Activated T-helper 1 cell treated with anti-CD3 and anti-CD28 coated beads, Interleukin-12 subunit alpha, Interleukin-12 subunit beta, Interleukin-2, Interleukin-4 antibody, amounts not matched to agents 30 ng/mL and 10 ng/mL and 1 ng/mL, durations not matched to agents 14 hours and 24 hours and 36 hours (primary cell): ENCODE measurements at regions of chr3 and their contacts with region 1.

Region 1: DNA sequence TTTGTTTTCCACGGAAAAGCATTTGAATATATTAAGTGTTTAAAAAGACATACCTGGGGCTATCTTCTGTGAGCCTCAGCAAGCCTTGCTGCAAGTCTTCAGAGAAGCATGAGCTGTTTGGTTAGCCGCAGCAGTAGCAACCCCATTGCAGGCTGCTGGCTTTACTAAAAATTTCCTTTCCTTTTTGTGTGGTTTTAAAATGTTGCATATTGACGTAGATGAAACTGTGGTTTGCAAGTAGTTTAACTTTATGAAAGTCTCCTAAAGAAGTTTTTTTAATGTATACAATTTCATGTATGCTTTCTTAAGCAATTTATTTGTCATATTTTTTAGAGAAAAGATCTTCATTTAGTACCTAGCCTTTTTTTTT is at the start of gene GPR171:
- DNase-seq: peak; percentile 72
- H3K4me3 Mint-ChIP-seq: peak within 1 kb of the TSS; percentile 96
- H3K27ac Mint-ChIP-seq: peak within 1 kb of the TSS; percentile 99
- H3K4me1 Mint-ChIP-seq: peaks cover 73% of the 10 kb centered on the region
- H3K27me3 Mint-ChIP-seq: no peaks in the 10 kb centered on the region
- total RNA-seq, gene GPR171: 172 and 191 TPM in 2 replicates

Region 2: DNA sequence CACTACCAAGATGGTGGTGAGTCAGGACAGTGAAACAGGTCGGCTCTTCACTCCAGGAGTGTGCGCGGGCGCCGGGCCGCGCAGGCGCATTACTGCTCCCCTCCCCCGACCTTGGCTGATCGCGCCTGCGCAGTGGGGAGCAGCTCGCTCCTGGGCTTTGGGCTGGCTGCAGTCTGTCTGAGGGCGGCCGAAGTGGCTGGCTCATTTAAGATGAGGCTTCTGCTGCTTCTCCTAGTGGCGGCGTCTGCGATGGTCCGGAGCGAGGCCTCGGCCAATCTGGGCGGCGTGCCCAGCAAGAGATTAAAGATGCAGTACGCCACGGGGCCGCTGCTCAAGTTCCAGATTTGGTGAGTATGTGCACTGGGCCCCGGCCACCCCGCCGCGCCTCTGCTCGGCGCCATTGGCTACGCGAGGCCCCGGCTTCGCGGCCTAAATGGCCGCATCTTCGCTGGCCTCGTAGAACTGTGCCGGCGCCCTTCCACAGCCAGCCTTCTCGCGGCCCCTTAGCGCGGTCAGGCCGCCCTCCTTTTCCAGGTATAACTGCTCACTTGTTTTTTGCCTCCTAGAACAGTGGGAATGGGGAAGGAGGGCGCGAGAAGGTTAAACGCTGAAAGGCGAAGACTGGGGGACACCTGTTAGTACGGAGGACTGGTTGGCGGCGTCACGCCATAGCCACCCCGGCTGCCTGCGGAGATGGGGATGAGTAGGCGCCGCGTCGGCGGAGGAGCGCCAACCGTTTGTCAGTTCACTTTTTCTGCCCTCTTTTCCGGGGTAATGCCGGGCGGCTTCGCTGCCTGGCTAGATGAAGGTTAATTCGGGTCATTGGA is 599.7 kb before region 1 on chr3 and contains the start of gene SELENOT:
- intact Hi-C with region 1: loop called (anchors 5 kb)
- DNase-seq: peak; percentile 96
- H3K4me3 Mint-ChIP-seq: peak within 1 kb of the TSS; percentile 99
- H3K27ac Mint-ChIP-seq: peak within 1 kb of the TSS; percentile 99
- H3K4me1 Mint-ChIP-seq: peaks cover 80% of the 10 kb centered on the region
- H3K27me3 Mint-ChIP-seq: peaks cover 2% of the 10 kb centered on the region
- total RNA-seq, gene SELENOT: 139 and 140 TPM in 2 replicates

Region 3: GRCh38 chr3:150787741-150788370 is 415.2 kb before region 1 on chr3:
- intact Hi-C with region 1: loop called (anchors 5 kb)
- DNase-seq: peak; percentile 61
- H3K4me3 Mint-ChIP-seq: peak overlapping the region; percentile 43
- H3K27ac Mint-ChIP-seq: no peak overlapping the region
- H3K4me1 Mint-ChIP-seq: peaks cover 52% of the 10 kb centered on the region
- H3K27me3 Mint-ChIP-seq: peaks cover 6% of the 10 kb centered on the region

Region 4: GRCh38 chr3:151183265-151183671 is 19.8 kb before region 1 on chr3:
- intact Hi-C with region 1: loop called (anchors 2 kb)
- DNase-seq: peak; percentile 33
- H3K4me3 Mint-ChIP-seq: peak overlapping the region; percentile 69
- H3K27ac Mint-ChIP-seq: peak overlapping the region; percentile 77
- H3K4me1 Mint-ChIP-seq: peaks cover 58% of the 10 kb centered on the region
- H3K27me3 Mint-ChIP-seq: peaks cover 1% of the 10 kb centered on the region

Region 5: GRCh38 chr3:151265866-151266265 is 62.8 kb after region 1 on chr3:
- intact Hi-C with region 1: loop called (anchors 1 kb)
- DNase-seq: no peak
- H3K4me3 Mint-ChIP-seq: no peak overlapping the region
- H3K27ac Mint-ChIP-seq: no peak overlapping the region
- H3K4me1 Mint-ChIP-seq: peaks cover 66% of the 10 kb centered on the region
- H3K27me3 Mint-ChIP-seq: peaks cover 5% of the 10 kb centered on the region

Region 6: GRCh38 chr3:152258448-152259393 is 1055.7 kb after region 1 on chr3:
- intact Hi-C with region 1: loop called (anchors 1 kb)
- DNase-seq: peak; percentile 62
- H3K4me3 Mint-ChIP-seq: peak overlapping the region; percentile 81
- H3K27ac Mint-ChIP-seq: peak overlapping the region; percentile 98
- H3K4me1 Mint-ChIP-seq: peaks cover 90% of the 10 kb centered on the region
- H3K27me3 Mint-ChIP-seq: no peaks in the 10 kb centered on the region